Posterior cingulate gyrus (tissue), 11 donors: ENCODE measurements at regions of chr9 and their contacts with region 1.

Region 1: DNA sequence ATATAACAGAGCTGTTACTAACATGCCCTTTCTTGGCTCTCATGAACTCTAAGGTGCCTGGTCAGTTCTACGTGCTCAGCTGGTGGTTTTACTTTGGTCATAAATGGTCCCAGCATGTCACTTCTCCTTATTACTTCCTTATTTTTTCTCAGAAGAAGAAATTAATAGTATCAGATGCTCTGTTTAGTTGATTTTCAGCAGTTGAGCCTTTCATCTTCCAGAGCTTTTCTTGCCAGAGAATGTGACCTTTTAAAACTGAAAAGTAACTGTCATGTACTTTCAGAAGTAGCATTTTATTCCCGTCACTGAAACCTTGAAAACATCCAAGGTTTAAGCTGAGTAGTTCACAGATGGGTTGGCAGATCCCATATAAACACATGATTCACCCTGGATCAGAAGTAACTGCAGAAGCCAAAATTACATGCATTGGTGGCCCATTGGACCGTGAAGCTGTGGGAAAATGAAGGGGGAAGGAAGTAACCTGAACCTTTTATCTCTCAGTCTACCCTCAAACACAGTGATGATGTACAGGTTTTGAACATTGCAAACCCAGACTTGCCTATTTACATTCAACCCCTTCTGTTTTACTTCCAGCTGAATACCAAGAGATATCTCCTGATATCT is 50.5 kb downstream of the HACD4 start:
- DNase-seq: no peak

Region 2: GRCh38 chr9:21028466-21028865 is 47.5 kb after region 1 on chr9:
- intact Hi-C with region 1: loop called (anchors 2 kb)
- DNase-seq: no peak

Region 3: DNA sequence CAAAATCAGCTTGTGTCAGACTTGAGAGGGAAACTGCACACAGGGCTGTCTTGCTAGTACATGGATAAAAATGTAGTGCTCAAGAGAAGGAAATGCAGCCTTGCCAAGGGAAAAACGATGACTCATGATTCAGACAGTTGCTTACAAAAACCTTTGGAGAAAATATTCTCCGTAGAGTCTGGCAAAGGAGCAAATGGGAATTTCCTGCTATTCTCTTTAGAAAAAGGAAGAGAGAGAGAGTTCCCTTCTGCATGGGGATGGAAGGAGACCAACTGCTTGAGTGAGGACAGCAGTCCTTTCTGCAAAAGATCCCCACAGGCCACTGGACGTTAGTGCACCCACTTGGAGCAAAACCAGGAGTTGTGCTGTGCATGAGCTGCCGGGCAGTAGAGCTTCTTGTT is 89.2 kb after region 1 on chr9:
- intact Hi-C with region 1: loop called (anchors 10 kb)
- DNase-seq: peak in 6 of 10 donors; percentile 4 to 87 (median 17)